Gastrocnemius medialis (tissue), 4 donors: ENCODE measurements at regions of chr2 and their contacts with region 1.

Region 1: DNA sequence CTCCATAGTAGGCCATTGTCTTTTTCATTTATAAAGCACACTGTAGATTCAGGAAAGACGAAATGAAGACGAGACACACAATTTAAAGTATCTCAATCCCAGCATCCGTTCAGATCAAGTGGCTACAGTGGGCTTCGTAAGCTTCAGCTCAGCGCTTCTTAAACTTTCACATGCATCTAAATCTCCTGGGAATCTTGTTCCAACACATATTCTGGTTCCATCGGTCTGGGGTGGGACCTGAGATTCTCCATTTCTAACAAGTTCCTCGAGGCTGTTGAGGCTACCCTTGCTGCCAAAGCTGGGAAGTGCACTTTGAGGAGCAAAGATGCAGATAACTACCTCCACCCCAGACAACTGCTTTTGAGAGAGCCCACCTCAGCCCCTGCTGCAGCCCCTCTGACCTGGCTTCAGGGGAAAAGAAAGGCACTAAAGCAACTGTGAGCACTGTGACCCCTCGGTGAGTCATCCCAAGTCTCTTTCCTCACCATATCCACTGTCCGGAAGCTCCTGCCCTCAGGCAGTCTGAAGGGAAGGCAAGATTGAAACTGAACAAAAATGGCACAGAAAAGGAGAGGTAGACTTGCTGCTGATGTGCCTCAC is 201.1 kb upstream of the FBXO11 start:
- DNase-seq: no peak
- ATAC-seq: no peak
- H3K4me3 ChIP-seq: peak overlapping the region in 1 of 4 donors; percentile 40
- H3K27ac ChIP-seq: peak overlapping the region; percentile 15 to 49 (median 32)
- H3K4me1 ChIP-seq: peaks cover 7 to 11% of the 10 kb centered on the region in 2 donors
- H3K27me3 ChIP-seq: no peaks in the 10 kb centered on the region
- CTCF ChIP-seq: no peak
- POLR2A ChIP-seq: no peak

Region 2: GRCh38 chr2:47437287-47437686 is 670.1 kb before region 1 on chr2:
- in situ Hi-C with region 1: no loop called
- intact Hi-C with region 1: loop called (anchors 5 kb)
- DNase-seq: no peak
- ATAC-seq: peak; percentile 56 to 75
- H3K4me3 ChIP-seq: no peak overlapping the region
- H3K27ac ChIP-seq: no peak overlapping the region
- H3K4me1 ChIP-seq: no peaks in the 10 kb centered on the region
- H3K27me3 ChIP-seq: no peaks in the 10 kb centered on the region
- CTCF ChIP-seq: peak in 2 of 5 experiments; percentile 29 to 58
- POLR2A ChIP-seq: no peak

Region 3: GRCh38 chr2:47767880-47768609 is 339.4 kb before region 1 on chr2:
- in situ Hi-C with region 1: no loop called
- intact Hi-C with region 1: loop called (anchors 5 kb)
- DNase-seq: peak; percentile 23 to 39
- ATAC-seq: peak; percentile 68 to 74
- H3K4me3 ChIP-seq: peak overlapping the region in 2 of 4 donors; percentile 16 to 28
- H3K27ac ChIP-seq: no peak overlapping the region
- H3K4me1 ChIP-seq: no peaks in the 10 kb centered on the region
- H3K27me3 ChIP-seq: no peaks in the 10 kb centered on the region
- CTCF ChIP-seq: peak; percentile 83 to 99 (median 95)
- POLR2A ChIP-seq: no peak

Region 4: DNA sequence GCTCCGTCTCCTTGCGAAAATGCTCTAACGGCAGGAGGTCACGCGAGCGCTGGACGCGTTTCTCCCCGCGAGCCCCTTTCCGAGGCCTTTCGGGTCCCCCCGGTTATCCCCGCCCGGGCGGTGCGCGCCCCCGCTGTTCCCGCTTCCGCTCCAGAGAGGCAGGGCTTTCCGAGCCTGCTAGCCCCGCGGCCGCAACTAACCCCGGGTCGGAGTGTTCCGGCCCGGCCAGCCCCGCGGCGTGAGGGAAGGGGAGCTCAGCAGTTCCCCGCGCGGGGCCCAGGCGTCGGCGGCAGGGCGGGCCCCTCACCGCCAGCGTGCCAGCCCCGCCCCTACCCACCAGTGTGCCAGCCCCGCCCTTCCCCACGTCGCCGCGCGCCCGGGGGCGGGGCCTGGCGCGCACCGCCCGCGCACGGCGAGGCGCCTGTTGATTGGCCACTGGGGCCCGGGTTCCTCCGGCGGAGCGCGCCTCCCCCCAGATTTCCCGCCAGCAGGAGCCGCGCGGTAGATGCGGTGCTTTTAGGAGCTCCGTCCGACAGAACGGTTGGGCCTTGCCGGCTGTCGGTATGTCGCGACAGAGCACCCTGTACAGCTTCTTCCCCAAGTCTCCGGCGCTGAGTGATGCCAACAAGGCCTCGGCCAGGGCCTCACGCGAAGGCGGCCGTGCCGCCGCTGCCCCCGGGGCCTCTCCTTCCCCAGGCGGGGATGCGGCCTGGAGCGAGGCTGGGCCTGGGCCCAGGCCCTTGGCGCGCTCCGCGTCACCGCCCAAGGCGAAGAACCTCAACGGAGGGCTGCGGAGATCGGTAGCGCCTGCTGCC is 324.5 kb before region 1 on chr2 and contains the start of gene MSH6:
- in situ Hi-C with region 1: no loop called
- intact Hi-C with region 1: loop called (anchors 2 kb)
- DNase-seq: peak; percentile 73 to 81
- ATAC-seq: peak; percentile 92 to 93
- H3K4me3 ChIP-seq: peak within 1 kb of the TSS; percentile 93 to 100 (median 98)
- H3K27ac ChIP-seq: peak within 1 kb of the TSS; percentile 82 to 97 (median 88)
- H3K4me1 ChIP-seq: peaks cover 8 to 15% of the 10 kb centered on the region in 2 donors
- H3K27me3 ChIP-seq: no peaks in the 10 kb centered on the region
- CTCF ChIP-seq: peak in 1 of 5 experiments; percentile 18
- POLR2A ChIP-seq: peak; percentile 72 to 83
- total RNA-seq, gene MSH6: 9.4 to 26.6 (median 16.3) TPM

Region 5: DNA sequence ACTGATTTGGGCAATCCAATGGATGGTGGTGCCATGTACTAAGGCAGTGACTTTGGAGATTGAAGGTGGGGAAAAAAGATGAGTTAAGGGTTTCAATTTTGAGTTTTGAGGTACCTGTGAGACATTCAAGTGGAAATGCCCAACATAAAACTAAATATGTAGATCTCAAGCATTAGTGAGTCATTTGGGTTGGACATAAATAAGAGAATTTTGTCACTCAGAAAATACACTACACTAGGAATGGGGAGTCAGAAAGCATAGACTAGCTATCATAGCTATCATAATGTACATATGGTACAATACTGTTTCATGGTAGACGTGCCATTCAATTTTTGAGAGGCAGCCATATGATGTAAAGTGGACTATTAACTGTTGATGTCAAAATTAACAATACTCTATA is 257.2 kb before region 1 on chr2:
- in situ Hi-C with region 1: loop called in 3 of 4 experiments (anchors 5 to 10 kb)
- intact Hi-C with region 1: no loop called
- DNase-seq: no peak
- ATAC-seq: no peak
- H3K4me3 ChIP-seq: no peak overlapping the region
- H3K27ac ChIP-seq: no peak overlapping the region
- H3K4me1 ChIP-seq: peaks cover 21 to 42% of the 10 kb centered on the region in 2 donors
- H3K27me3 ChIP-seq: no peaks in the 10 kb centered on the region
- CTCF ChIP-seq: no peak
- POLR2A ChIP-seq: no peak

Region 6: GRCh38 chr2:47867205-47867604 is 240.2 kb before region 1 on chr2:
- in situ Hi-C with region 1: loop called in 1 of 4 experiments (anchors 10 kb)
- intact Hi-C with region 1: no loop called
- DNase-seq: no peak
- ATAC-seq: peak; percentile 57 to 75
- H3K4me3 ChIP-seq: no peak overlapping the region
- H3K27ac ChIP-seq: peak overlapping the region; percentile 32 to 64 (median 42)
- H3K4me1 ChIP-seq: peaks cover 29 to 50% of the 10 kb centered on the region in 2 donors
- H3K27me3 ChIP-seq: no peaks in the 10 kb centered on the region
- CTCF ChIP-seq: no peak
- POLR2A ChIP-seq: no peak

Region 7: GRCh38 chr2:47906157-47907038 is 201.0 kb before region 1 on chr2 and contains the start of gene FBXO11:
- in situ Hi-C with region 1: no loop called
- intact Hi-C with region 1: loop called (anchors 2 kb)
- DNase-seq: peak; percentile 93 to 96
- ATAC-seq: peak; percentile 87 to 88
- H3K4me3 ChIP-seq: peak within 1 kb of the TSS; percentile 86 to 99 (median 90)
- H3K27ac ChIP-seq: peak within 1 kb of the TSS; percentile 98 to 100 (median 99)
- H3K4me1 ChIP-seq: peaks cover 22 to 31% of the 10 kb centered on the region in 2 donors
- H3K27me3 ChIP-seq: no peaks in the 10 kb centered on the region
- CTCF ChIP-seq: peak in 4 of 5 experiments; percentile 44 to 56 (median 50)
- POLR2A ChIP-seq: peak; percentile 68 to 88
- total RNA-seq, gene FBXO11: 21.5 to 31.8 (median 28.4) TPM